GM12878 (cell line): ENCODE measurements at regions of chr2 and their contacts with region 1.

Region 1: GRCh38 chr2:221573430-221574230 is 1.5 kb upstream of the EPHA4 start:
- DNase-seq: no peak
- ATAC-seq: peak; percentile 74
- H3K4me3 ChIP-seq: peak overlapping the region; percentile 82
- H3K27ac ChIP-seq: no peak overlapping the region
- H3K4me1 ChIP-seq: peaks cover 14% of the 10 kb centered on the region
- H3K27me3 ChIP-seq: peaks cover 0 to 16% of the 10 kb centered on the region in 2 experiments; a peak in 3 of 4 replicates
- CTCF ChIP-seq: peak; percentile 88 to 97 (median 93); a peak in 5 of 6 replicates
- EP300 ChIP-seq: no peak
- POLR2A ChIP-seq: no peak
- RAD21 ChIP-seq: peak; percentile 91

Region 2: DNA sequence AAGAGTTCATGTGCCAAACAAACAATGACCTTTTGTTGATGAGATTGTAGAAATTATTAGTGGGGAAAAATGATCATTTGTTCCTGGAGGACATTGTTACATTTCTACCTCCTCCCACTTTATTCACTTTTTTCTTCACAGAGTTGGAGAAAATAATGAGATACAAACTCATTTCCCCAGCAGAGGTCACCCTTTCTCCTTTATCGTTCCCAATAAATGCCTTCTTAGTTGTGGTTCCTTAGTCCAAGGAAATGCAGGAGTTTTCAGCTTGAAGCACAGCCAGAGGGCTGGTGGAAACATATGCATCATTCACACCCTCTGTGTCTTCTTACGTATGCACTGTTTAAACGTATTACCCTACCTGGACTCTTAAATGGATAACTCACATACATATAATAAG is 1837.4 kb before region 1 on chr2:
- CTCF ChIA-PET with region 1: interaction called, 10 read pairs
- POLR2A ChIA-PET with region 1: no interaction called
- RAD21 ChIA-PET with region 1: no interaction called
- SMC1A ChIA-PET with region 1: no interaction called
- in situ Hi-C with region 1: no loop called
- intact Hi-C with region 1: loop called (anchors 2 kb)
- DNase-seq: no peak
- ATAC-seq: peak; percentile 40; the same call in 2 of the 3 replicates
- H3K4me3 ChIP-seq: no peak overlapping the region
- H3K27ac ChIP-seq: no peak overlapping the region
- H3K4me1 ChIP-seq: no peaks in the 10 kb centered on the region
- H3K27me3 ChIP-seq: no peaks in the 10 kb centered on the region; a peak in 1 of 4 replicates
- CTCF ChIP-seq: peak; percentile 20 to 52 (median 41); a peak in 3 of 6 replicates
- EP300 ChIP-seq: no peak
- POLR2A ChIP-seq: no peak
- RAD21 ChIP-seq: peak; percentile 66

Region 3: GRCh38 chr2:220315098-220315823 is 1258.4 kb before region 1 on chr2:
- CTCF ChIA-PET with region 1: no interaction called
- POLR2A ChIA-PET with region 1: no interaction called
- RAD21 ChIA-PET with region 1: no interaction called
- SMC1A ChIA-PET with region 1: no interaction called
- in situ Hi-C with region 1: no loop called
- intact Hi-C with region 1: loop called (anchors 5 kb)
- DNase-seq: no peak
- ATAC-seq: no peak
- H3K4me3 ChIP-seq: no peak overlapping the region
- H3K27ac ChIP-seq: no peak overlapping the region
- H3K4me1 ChIP-seq: no peaks in the 10 kb centered on the region
- H3K27me3 ChIP-seq: no peaks in the 10 kb centered on the region
- CTCF ChIP-seq: no peak
- EP300 ChIP-seq: no peak
- POLR2A ChIP-seq: no peak
- RAD21 ChIP-seq: no peak

Region 4: DNA sequence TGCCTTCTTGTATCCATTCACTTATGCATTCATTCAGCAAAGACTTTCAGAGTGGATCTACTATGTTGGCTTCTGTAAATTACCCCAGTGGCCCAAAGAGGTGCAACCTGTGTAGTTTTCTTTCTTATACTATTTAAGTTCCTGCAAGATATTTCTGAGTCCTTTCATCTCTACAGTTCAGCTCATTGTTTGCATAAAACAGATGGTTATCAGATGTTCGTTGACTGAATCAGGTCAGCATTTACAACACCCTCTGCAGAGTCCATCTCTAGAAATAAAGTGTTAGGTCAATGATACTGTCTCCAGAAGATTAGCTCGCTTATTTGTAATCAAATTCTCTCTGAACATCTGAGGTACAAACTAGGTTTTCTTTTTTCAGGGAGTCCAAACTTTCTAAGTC is 729.4 kb before region 1 on chr2:
- CTCF ChIA-PET with region 1: no interaction called
- POLR2A ChIA-PET with region 1: no interaction called
- RAD21 ChIA-PET with region 1: no interaction called
- SMC1A ChIA-PET with region 1: no interaction called
- in situ Hi-C with region 1: no loop called
- intact Hi-C with region 1: loop called (anchors 5 kb)
- DNase-seq: no peak
- ATAC-seq: 0 out of 3 replicates have a peak, but pooled peaks have one; percentile 16
- H3K4me3 ChIP-seq: no peak overlapping the region
- H3K27ac ChIP-seq: no peak overlapping the region
- H3K4me1 ChIP-seq: no peaks in the 10 kb centered on the region
- H3K27me3 ChIP-seq: no peaks in the 10 kb centered on the region; a peak in 1 of 4 replicates
- CTCF ChIP-seq: no peak
- EP300 ChIP-seq: no peak
- POLR2A ChIP-seq: no peak
- RAD21 ChIP-seq: no peak

Region 5: DNA sequence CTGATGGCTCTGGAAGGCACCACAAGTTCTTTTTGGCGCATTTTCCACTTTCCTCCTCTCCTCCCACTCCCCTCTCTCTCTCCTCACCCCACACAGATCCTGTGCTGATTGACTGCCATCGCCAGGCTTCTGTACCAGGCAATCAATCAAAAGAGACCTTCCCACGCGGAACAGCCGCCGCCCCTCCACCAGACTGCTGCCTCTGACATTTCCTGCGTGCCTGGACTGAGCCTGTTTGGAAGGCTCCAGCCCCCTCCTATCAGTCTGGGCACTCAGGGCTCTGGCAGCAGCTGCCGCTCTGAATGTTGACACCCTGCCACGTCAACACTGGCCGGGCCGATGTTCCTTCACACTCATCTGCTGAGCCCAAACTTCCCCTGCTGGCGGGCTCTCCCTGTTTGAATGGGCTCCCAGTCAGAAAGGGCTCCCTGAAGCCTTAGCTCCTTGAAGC is 469.2 kb before region 1 on chr2:
- CTCF ChIA-PET with region 1: no interaction called
- POLR2A ChIA-PET with region 1: no interaction called
- RAD21 ChIA-PET with region 1: no interaction called
- SMC1A ChIA-PET with region 1: interaction called, 3 read pairs
- in situ Hi-C with region 1: no loop called
- intact Hi-C with region 1: loop called (anchors 10 kb)
- DNase-seq: no peak
- ATAC-seq: peak; percentile 86
- H3K4me3 ChIP-seq: no peak overlapping the region
- H3K27ac ChIP-seq: no peak overlapping the region; the same call in 1 of the 2 replicates
- H3K4me1 ChIP-seq: peaks cover 9% of the 10 kb centered on the region; the same call in 1 of the 2 replicates
- H3K27me3 ChIP-seq: no peaks in the 10 kb centered on the region
- CTCF ChIP-seq: no peak
- EP300 ChIP-seq: no peak
- POLR2A ChIP-seq: no peak
- RAD21 ChIP-seq: no peak

Region 6: DNA sequence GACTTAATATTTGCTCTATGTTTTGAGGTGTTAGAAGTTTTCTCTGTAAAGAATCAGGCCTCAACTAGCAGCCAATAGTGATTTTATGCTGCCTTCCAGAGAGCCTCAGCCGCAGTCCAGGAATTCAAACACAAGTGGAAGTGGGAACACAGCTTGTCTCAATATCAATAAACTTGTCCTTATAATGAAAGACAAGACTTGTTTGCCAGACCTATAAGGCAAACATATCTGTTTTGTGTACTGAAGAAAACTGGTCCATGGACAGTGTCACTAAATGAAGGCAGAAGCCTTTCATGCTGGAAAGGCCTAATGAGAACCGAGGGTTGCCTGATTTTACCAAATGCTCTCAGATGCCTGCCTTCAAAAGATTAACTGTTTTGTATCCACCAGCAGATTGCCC is 183.7 kb before region 1 on chr2:
- CTCF ChIA-PET with region 1: no interaction called
- POLR2A ChIA-PET with region 1: no interaction called
- RAD21 ChIA-PET with region 1: no interaction called
- SMC1A ChIA-PET with region 1: no interaction called
- in situ Hi-C with region 1: no loop called
- intact Hi-C with region 1: loop called (anchors 5 kb)
- DNase-seq: no peak
- ATAC-seq: no peak
- H3K4me3 ChIP-seq: no peak overlapping the region
- H3K27ac ChIP-seq: no peak overlapping the region
- H3K4me1 ChIP-seq: no peaks in the 10 kb centered on the region
- H3K27me3 ChIP-seq: no peaks in the 10 kb centered on the region
- CTCF ChIP-seq: no peak
- EP300 ChIP-seq: no peak
- POLR2A ChIP-seq: no peak
- RAD21 ChIP-seq: no peak